ENCODE measurements at regions of chr9 and their contacts with region 1.

Region 1: DNA sequence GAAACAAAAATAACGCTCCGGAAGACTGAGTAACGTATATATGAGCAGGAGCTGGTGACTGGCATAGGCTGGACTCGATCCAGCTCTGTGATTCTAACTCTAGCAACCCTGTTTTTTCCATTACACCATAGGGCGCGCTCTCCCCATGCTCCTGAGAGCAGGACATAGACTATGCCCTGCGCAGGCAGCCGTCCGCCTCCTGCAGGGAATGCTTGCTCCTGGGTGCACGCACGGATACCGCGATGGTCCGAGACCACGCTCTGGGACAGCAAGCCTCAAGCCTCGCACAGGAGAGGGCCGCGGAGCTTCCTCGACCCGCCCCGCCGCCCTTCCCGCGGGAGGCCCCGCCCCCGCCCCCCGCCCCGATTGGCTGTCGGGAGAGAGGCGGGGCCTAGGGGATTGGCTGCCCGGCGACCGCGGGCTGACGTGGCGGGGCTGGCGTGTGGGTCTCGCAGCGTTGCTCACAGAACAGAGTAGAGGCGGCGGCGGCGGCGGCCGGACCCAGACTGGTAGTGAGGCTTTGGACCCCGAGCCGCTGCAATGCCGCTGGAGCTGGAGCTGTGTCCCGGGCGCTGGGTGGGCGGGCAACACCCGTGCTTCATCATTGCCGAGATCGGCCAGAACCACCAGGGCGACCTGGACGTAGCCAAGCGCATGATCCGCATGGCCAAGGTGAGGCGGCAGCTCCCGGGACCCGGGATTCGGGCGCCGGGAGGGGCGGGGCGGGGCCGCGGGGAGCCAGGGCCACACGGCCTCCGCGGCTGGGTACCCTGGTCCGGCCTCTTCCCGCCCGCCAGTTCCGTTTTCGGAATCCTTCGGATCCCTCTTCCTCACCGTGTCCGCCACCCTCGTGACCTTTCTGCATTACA is at the start of gene NANS:
- DNase-seq: peak; percentile 88 to 94 (median 90)
- H3K4me3 ChIP-seq: peak within 1 kb of the TSS; percentile 56 to 76
- H3K4me3 Mint-ChIP-seq: peak within 1 kb of the TSS; percentile 96 to 100 (median 99)
- H3K27ac ChIP-seq: peak within 1 kb of the TSS; percentile 82
- H3K27ac Mint-ChIP-seq: peak within 1 kb of the TSS; percentile 90 to 99 (median 99)
- H3K4me1 ChIP-seq: peaks cover 22% of the 10 kb centered on the region
- H3K4me1 Mint-ChIP-seq: peaks cover 12 to 32% (median 22%) of the 10 kb centered on the region in 4 donors
- H3K27me3 ChIP-seq: no peaks in the 10 kb centered on the region
- H3K27me3 Mint-ChIP-seq: no peaks in the 10 kb centered on the region
- total RNA-seq, gene NANS: 22.1 to 23.2 TPM

Region 2: DNA sequence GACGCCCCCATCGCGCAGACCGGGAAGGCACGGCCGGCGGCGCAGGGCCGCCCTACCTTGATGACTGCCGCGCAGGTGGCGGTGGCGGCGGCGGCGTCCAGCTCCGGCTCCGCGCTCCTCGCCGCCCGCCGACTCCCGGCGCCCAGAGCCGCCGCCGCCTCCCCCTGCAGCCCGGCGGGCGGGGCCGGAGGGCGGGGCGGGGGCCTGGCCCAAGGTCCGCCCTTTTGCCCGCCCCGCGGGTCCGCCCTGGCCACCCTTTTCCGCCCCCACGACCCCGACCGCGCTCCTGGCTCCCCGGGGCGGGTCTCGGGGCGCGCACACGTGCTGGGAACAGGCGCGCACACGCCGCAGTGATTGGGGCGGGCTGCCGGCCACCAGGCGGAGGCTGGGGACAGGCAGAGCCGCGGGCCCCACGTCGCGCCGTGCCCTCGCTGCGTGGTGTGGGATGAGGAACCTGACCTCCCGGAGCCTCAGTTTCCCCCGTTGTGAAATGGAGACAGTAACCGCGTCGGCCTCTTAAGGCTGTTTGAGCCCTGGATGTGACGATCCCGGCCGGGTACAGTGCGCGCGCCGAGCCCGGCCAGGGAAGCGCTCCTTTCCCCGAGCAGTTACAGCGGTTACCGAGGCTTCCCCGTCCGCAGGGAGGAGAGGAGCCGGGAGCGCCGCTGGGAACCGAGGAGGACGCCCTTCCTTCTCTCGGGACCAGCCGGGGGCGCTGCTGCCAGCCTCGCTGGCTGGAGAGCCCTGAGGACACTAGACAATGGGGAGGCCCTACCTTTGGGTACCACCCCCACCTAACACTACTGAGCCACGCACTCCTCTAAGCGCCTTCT is 136.2 kb after region 1 on chr9 and contains the start of gene CORO2A:
- CTCF ChIA-PET with region 1: interaction called, 3 read pairs
- POLR2A ChIA-PET with region 1: interaction called, 6 read pairs
- intact Hi-C with region 1: loop called (anchors 5 kb)
- DNase-seq: peak; percentile 64 to 72 (median 70)
- H3K4me3 ChIP-seq: peak within 1 kb of the TSS; percentile 52 to 67
- H3K4me3 Mint-ChIP-seq: peak within 1 kb of the TSS; percentile 83 to 95 (median 91)
- H3K27ac ChIP-seq: peak within 1 kb of the TSS; percentile 53
- H3K27ac Mint-ChIP-seq: peak within 1 kb of the TSS; percentile 63 to 91 (median 85)
- H3K4me1 ChIP-seq: peaks cover 44% of the 10 kb centered on the region
- H3K4me1 Mint-ChIP-seq: peaks cover 16 to 50% (median 37%) of the 10 kb centered on the region in 4 donors
- H3K27me3 ChIP-seq: no peaks in the 10 kb centered on the region
- H3K27me3 Mint-ChIP-seq: no peaks in the 10 kb centered on the region
- total RNA-seq, gene CORO2A: 8.3 to 8.6 TPM

Region 3: DNA sequence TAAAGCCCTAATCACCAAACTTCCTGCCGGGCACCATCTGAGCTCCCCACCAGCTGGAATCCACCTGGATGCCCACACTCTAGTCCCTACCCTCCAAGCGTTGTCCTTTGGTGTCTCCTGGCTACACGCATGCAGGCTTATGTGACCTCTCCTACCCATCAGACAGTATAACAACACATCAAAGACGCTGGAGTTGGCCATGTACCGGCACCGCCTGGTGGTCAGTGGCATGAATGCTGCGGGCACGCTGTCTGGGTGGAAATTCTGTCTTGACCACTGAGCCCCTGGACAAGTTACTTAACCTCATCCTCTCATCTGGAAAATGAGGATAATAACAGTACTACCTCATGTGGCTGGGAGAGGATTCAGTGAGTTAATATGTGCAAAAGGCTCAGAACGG is 159.3 kb after region 1 on chr9:
- CTCF ChIA-PET with region 1: no interaction called
- POLR2A ChIA-PET with region 1: no interaction called
- intact Hi-C with region 1: no loop called
- DNase-seq: no peak
- H3K4me3 ChIP-seq: no peak overlapping the region
- H3K4me3 Mint-ChIP-seq: no peak overlapping the region
- H3K27ac ChIP-seq: no peak overlapping the region
- H3K27ac Mint-ChIP-seq: peak overlapping the region in 2 of 7 donors; percentile 24 to 78
- H3K4me1 ChIP-seq: no peaks in the 10 kb centered on the region
- H3K4me1 Mint-ChIP-seq: peaks cover 0 to 3% (median 0%) of the 10 kb centered on the region in 4 donors
- H3K27me3 ChIP-seq: no peaks in the 10 kb centered on the region
- H3K27me3 Mint-ChIP-seq: no peaks in the 10 kb centered on the region

Region 4: DNA sequence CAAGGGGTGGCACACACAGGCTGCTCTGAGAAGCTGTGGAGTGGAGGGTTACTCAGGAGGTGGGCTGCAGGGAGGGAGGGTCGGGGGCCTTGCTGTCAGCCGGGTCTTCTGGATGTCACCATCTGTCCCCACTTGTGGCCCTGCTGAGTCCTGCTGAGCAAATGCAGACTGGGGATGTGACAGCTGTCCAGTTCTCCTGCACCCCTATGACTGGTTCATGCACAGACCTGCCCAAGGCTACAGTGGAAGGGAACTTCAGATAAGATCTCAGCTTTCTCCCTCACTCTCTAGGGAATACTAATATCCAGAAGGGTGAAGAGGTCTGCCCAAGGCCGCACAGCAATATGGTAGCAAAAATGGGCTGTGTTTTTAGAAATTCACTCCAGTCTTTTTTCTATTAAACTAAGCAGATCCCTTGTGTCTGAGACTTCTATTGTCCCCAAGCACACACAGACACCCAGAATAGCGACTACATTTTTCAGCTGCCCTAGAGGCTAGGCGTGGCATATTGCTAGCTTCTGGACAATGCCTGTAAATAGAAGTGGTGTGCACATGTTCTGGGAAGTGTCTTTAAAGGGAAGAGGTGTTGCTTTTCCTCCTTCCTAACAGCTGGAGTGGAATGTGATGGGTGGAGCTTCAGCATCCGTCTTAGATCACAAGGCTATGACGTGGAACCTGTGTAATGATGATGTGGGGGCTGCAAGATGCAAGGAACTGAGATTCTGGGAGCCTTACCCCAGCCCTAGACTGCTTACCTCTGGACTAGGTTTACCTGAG is 250.1 kb after region 1 on chr9:
- CTCF ChIA-PET with region 1: no interaction called
- POLR2A ChIA-PET with region 1: no interaction called
- intact Hi-C with region 1: no loop called
- DNase-seq: no peak
- H3K4me3 ChIP-seq: no peak overlapping the region
- H3K4me3 Mint-ChIP-seq: no peak overlapping the region
- H3K27ac ChIP-seq: no peak overlapping the region
- H3K27ac Mint-ChIP-seq: no peak overlapping the region
- H3K4me1 ChIP-seq: no peaks in the 10 kb centered on the region
- H3K4me1 Mint-ChIP-seq: no peaks in the 10 kb centered on the region
- H3K27me3 ChIP-seq: no peaks in the 10 kb centered on the region
- H3K27me3 Mint-ChIP-seq: peaks cover 0 to 2% of the 10 kb centered on the region in 2 donors

Measured in CD4-positive, alpha-beta memory T cell (primary cell).